ENCODE measurements at regions of chr17 and their contacts with region 1.

Region 1: DNA sequence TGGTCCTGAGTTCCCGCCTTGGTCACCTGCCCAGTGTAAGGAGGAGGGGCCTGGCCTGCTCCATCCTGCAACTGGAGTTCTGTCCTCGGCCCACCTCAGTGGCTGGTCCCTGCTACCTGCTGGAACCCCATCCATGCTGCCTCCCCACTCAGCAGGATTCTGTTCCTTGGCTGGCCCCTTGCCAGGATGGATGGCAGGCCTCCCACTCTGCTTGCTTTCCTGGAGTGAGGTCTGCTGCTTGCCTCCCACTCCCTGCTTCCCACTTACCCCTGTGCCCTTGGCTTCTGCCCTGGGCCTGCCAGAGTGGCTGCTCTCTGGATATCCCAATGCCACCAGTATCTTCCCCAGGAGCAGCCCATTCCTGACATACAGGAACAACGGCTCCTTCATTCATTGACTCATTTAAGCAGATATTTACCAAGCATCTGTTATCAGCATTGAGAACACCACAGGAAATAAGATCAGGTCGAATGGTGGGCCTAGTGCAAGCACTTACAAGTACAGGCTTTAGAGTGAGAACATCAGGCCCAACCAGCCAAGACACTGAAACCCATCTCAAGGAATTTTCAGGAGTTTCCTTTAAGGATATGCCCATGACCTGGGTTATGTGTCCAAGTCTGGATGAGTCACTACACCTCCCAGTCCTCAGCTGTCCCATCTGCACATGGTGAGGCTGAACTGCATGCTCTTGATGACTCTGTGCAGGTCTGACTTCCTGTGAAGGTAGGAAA is 17.0 kb upstream of the RPRML start:
- DNase-seq: peak in 1 of 6 donors; percentile 35
- ATAC-seq: no peak
- H3K4me3 ChIP-seq: no peak overlapping the region
- H3K27ac ChIP-seq: no peak overlapping the region
- H3K4me1 ChIP-seq: peaks cover 0 to 4% (median 0%) of the 10 kb centered on the region in 3 donors
- H3K27me3 ChIP-seq: no peaks in the 10 kb centered on the region
- CTCF ChIP-seq: no peak

Region 2: DNA sequence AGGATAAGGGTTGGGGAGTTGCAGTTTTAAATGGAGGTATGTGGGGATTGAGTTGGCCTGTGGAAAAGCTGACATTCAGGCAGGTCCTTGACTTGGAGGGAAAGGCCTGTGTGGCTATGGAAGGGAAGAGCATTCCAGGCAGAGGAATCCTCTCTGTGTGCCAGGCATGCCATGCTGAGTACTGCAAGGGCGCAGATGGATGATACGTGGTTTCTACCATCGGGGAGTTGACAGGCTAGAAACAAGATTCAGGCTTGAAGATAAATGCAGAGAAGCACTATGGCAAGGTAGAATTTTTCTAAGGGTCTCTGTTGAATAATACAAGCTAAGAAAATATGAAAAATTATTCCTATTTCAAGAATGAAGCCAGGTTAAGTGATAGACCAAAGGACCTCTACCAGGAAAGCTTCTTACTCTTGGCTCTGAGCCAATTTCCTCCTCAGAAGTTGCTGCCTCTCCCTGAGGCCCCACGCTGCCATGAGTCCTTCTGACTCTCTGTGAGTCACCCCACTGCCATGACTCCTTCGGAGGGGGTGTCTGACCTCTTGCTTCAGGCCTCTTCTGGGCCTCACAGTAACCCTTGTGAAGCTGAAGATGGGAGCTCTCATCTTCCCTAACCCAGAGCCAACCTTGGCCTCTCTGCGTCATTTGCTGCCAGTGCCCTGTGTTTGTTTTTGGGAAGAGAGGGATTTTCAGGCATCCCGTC is 253.3 kb before region 1 on chr17:
- intact Hi-C with region 1: no loop called
- DNase-seq: no peak
- ATAC-seq: peak in 3 of 4 donors; percentile 15 to 54 (median 53)
- H3K4me3 ChIP-seq: no peak overlapping the region
- H3K27ac ChIP-seq: no peak overlapping the region
- H3K4me1 ChIP-seq: no peaks in the 10 kb centered on the region
- H3K27me3 ChIP-seq: no peaks in the 10 kb centered on the region
- CTCF ChIP-seq: no peak

Region 3: DNA sequence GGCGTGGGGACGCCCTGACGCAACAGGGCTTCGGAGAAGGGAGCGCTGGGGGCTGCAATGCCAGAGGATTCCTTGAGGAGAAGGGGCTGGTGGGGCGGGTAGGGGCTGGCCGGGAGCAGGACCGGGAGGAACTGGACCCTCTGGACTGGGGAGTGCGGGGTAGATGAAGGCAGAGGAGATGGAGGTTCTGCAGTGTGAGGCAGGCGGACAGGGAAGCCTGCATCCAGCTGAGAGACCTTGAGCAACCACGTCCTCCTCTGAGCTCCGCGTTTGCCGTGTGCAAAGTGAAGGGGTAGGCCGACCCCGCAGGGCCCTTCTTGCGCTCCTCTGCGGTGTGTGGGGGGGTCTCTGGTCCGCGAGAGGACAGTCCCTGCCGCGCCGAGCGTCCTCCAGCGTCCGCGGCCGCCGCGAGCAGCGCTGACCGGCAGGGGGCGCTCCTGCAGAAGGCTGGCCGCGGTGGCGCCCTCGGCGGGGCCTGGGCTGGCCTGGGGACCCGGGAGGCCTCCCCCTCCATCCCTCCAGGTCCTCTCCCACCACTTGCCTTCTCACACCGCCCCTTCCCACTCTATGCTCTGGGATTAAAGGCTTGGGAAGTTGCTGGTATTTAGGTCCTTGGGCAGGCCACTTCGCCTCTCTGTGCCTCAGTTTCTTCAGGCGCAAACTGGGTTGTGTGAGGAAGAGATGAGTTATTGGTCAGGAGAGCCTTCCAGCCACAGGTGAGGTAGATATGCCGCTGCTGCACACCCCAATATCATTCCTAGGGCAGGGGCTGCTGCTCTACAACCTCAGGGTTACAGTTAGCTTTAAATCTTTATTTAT is 154.2 kb before region 1 on chr17:
- intact Hi-C with region 1: loop called in 1 of 3 experiments (anchors 10 kb)
- DNase-seq: peak in 3 of 6 donors; percentile 42 to 85 (median 56)
- ATAC-seq: peak; percentile 79 to 93 (median 88)
- H3K4me3 ChIP-seq: no peak overlapping the region
- H3K27ac ChIP-seq: no peak overlapping the region
- H3K4me1 ChIP-seq: no peaks in the 10 kb centered on the region
- H3K27me3 ChIP-seq: peaks cover 0 to 5% (median 0%) of the 10 kb centered on the region in 4 donors
- CTCF ChIP-seq: peak; percentile 74 to 88 (median 80)

Region 4: GRCh38 chr17:46940621-46941404 is 55.2 kb before region 1 on chr17:
- intact Hi-C with region 1: loop called in 1 of 3 experiments (anchors 10 kb)
- DNase-seq: peak in 5 of 6 donors; percentile 69 to 88 (median 78)
- ATAC-seq: peak; percentile 72 to 93 (median 86)
- H3K4me3 ChIP-seq: no peak overlapping the region
- H3K27ac ChIP-seq: no peak overlapping the region
- H3K4me1 ChIP-seq: peaks cover 0 to 3% (median 0%) of the 10 kb centered on the region in 3 donors
- H3K27me3 ChIP-seq: no peaks in the 10 kb centered on the region
- CTCF ChIP-seq: peak; percentile 57 to 73 (median 66)

Measured in pancreas (tissue), 10 donors.